Naive thymus-derived CD4-positive, alpha-beta T cell (primary cell): ENCODE measurements at regions of chr7 and their contacts with region 1.

Region 1: GRCh38 chr7:85638394-85638793 is 451.5 kb upstream of the SEMA3D start:
- DNase-seq: no peak
- ATAC-seq: no peak
- H3K4me3 ChIP-seq: no peak overlapping the region
- H3K4me3 Mint-ChIP-seq: no peak overlapping the region
- H3K27ac ChIP-seq: no peak overlapping the region
- H3K27ac Mint-ChIP-seq: no peak overlapping the region
- H3K4me1 ChIP-seq: no peaks in the 10 kb centered on the region
- H3K4me1 Mint-ChIP-seq: no peaks in the 10 kb centered on the region
- H3K27me3 ChIP-seq: no peaks in the 10 kb centered on the region
- H3K27me3 Mint-ChIP-seq: no peaks in the 10 kb centered on the region

Region 2: GRCh38 chr7:85104432-85105205 is 533.8 kb before region 1 on chr7:
- CTCF ChIA-PET with region 1: no interaction called
- POLR2A ChIA-PET with region 1: no interaction called
- intact Hi-C with region 1: no loop called
- DNase-seq: no peak
- ATAC-seq: no peak
- H3K4me3 ChIP-seq: no peak overlapping the region
- H3K4me3 Mint-ChIP-seq: no peak overlapping the region
- H3K27ac ChIP-seq: no peak overlapping the region
- H3K27ac Mint-ChIP-seq: no peak overlapping the region
- H3K4me1 ChIP-seq: no peaks in the 10 kb centered on the region
- H3K4me1 Mint-ChIP-seq: no peaks in the 10 kb centered on the region
- H3K27me3 ChIP-seq: no peaks in the 10 kb centered on the region
- H3K27me3 Mint-ChIP-seq: peaks cover 0 to 4% (median 0%) of the 10 kb centered on the region in 5 donors

Region 3: GRCh38 chr7:85595639-85596268 is 42.6 kb before region 1 on chr7:
- CTCF ChIA-PET with region 1: no interaction called
- POLR2A ChIA-PET with region 1: no interaction called
- intact Hi-C with region 1: loop called in 1 of 2 experiments (anchors 1 kb)
- DNase-seq: no peak
- ATAC-seq: no peak
- H3K4me3 ChIP-seq: no peak overlapping the region
- H3K4me3 Mint-ChIP-seq: no peak overlapping the region
- H3K27ac ChIP-seq: no peak overlapping the region
- H3K27ac Mint-ChIP-seq: no peak overlapping the region
- H3K4me1 ChIP-seq: no peaks in the 10 kb centered on the region
- H3K4me1 Mint-ChIP-seq: no peaks in the 10 kb centered on the region
- H3K27me3 ChIP-seq: no peaks in the 10 kb centered on the region
- H3K27me3 Mint-ChIP-seq: no peaks in the 10 kb centered on the region

Region 4: GRCh38 chr7:85612514-85612913 is 25.9 kb before region 1 on chr7:
- CTCF ChIA-PET with region 1: no interaction called
- POLR2A ChIA-PET with region 1: no interaction called
- intact Hi-C with region 1: no loop called
- DNase-seq: no peak
- ATAC-seq: no peak
- H3K4me3 ChIP-seq: no peak overlapping the region
- H3K4me3 Mint-ChIP-seq: no peak overlapping the region
- H3K27ac ChIP-seq: no peak overlapping the region
- H3K27ac Mint-ChIP-seq: no peak overlapping the region
- H3K4me1 ChIP-seq: no peaks in the 10 kb centered on the region
- H3K4me1 Mint-ChIP-seq: no peaks in the 10 kb centered on the region
- H3K27me3 ChIP-seq: no peaks in the 10 kb centered on the region
- H3K27me3 Mint-ChIP-seq: no peaks in the 10 kb centered on the region